A673 (cell line): ENCODE measurements at regions of chr11 and their contacts with region 1.

Region 1: DNA sequence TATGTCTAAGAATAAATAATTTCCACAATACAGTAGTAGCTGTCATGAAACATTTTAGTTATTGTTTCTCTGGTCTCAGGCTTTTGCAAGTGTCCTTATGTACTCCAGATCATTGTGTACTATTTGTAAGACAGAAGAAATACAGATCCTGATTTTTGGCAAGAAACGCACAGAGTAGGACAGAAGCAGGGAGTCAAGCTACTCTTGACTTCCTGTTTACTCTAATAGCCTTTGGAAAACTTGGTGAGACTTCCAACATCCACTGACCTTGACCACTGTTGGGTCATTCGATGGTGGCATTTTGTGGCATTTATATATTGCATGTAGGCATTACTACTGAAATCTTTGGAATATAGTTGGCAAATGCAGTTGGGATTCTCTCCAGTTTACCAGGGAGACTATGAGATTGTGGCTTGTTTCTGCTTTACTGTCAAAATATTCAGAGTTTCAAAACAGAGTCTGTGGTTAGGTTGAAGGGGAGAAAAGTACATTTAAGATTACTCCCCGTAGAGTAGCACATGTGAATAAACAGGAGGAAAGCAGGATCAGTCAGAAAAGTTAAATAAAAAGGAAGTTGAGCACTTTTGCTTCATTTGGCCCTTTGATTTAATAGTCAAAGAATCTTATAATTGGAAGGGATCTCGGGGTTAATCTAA is 726.1 kb upstream of the CCDC90B start:
- DNase-seq: no peak
- H3K4me3 ChIP-seq: no peak overlapping the region
- H3K27ac ChIP-seq: no peak overlapping the region
- H3K4me1 ChIP-seq: no peaks in the 10 kb centered on the region
- H3K27me3 ChIP-seq: no peaks in the 10 kb centered on the region
- CTCF ChIP-seq: no peak

Region 2: GRCh38 chr11:82988936-82989627 is 1023.2 kb before region 1 on chr11:
- CTCF ChIA-PET with region 1: interaction called, 12 read pairs
- POLR2A ChIA-PET with region 1: no interaction called
- intact Hi-C with region 1: no loop called
- DNase-seq: no peak
- H3K4me3 ChIP-seq: no peak overlapping the region
- H3K27ac ChIP-seq: no peak overlapping the region
- H3K4me1 ChIP-seq: no peaks in the 10 kb centered on the region
- H3K27me3 ChIP-seq: no peaks in the 10 kb centered on the region
- CTCF ChIP-seq: no peak

Region 3: GRCh38 chr11:84455691-84456090 is 443.4 kb after region 1 on chr11:
- CTCF ChIA-PET with region 1: no interaction called
- POLR2A ChIA-PET with region 1: no interaction called
- intact Hi-C with region 1: no loop called
- DNase-seq: no peak
- H3K4me3 ChIP-seq: no peak overlapping the region
- H3K27ac ChIP-seq: no peak overlapping the region
- H3K4me1 ChIP-seq: peaks cover 13% of the 10 kb centered on the region
- H3K27me3 ChIP-seq: no peaks in the 10 kb centered on the region
- CTCF ChIP-seq: no peak